ENCODE measurements at regions of chr1 and their contacts with region 1.

Region 1: DNA sequence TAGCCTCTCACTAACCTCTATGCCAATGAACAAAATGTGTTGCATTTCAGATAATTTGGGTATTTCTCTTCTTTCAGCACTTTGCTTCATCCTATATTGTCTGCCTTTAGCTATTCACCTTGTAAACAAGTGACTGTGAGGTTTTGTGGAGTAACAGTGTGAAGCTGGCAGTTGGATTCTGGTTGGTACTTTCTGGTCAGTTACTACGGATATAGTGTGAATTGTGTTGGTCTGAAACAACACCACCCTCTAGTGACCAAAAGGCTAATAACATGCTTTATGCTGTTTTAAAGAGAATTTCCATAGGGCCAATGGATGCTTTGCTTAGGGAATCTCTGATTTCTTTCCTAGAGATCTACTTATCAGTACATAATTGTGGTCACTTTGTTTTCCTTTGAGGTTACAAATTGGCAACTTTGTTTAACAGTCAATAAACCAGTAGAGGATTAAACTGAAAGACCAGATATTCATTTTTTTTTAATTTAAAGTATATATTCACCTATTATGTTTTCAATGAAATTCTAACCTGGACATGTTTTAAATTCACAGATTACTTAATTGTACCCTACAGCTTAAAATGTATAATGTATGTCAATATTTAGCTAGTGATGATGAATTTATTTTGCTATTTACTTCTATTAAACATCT is 2.5 kb upstream of the PTGER3 start:
- DNase-seq: no peak
- H3K4me3 Mint-ChIP-seq: no peak overlapping the region
- H3K27ac Mint-ChIP-seq: no peak overlapping the region
- H3K4me1 Mint-ChIP-seq: peaks cover 18% of the 10 kb centered on the region
- H3K27me3 Mint-ChIP-seq: peaks cover 44% of the 10 kb centered on the region

Region 2: DNA sequence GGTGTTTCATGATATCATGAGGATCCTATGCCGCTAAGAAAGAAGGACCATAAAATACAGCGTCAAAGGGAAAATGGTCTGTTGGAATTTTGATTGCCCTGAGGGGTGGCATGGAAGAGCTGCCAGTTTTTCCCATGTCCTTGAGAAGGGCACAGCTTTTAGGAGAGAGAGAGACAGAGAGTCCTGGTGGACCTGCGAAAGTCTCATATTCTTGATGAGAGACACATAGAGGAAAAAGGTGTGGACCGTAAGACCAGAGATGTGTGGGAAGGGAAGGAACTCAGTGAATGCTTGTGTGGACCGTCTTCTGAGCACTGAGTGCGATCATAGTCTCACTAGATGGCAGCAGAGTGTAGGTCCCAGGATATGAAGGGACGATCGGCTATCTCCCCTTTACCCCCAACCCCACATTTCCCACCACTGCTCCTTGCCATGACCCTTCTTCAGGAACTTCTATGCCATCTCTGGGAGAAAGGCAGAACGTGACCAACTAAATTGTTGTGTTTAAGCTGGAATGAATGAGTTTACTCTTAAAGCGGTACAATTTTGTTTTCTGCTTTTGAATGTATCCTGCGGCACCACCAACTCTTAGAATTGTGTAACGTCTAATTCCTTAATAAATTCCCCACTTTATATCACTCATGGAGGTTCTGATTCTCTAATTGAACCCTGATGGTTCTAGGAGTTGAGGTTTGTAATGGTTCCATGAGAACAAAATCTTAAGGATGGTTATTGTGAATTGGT is 521.3 kb before region 1 on chr1:
- intact Hi-C with region 1: loop called (anchors 1 kb)
- DNase-seq: no peak
- H3K4me3 Mint-ChIP-seq: no peak overlapping the region
- H3K27ac Mint-ChIP-seq: no peak overlapping the region
- H3K4me1 Mint-ChIP-seq: peaks cover 6% of the 10 kb centered on the region
- H3K27me3 Mint-ChIP-seq: peaks cover 27% of the 10 kb centered on the region

Region 3: GRCh38 chr1:70685300-70686241 is 364.5 kb before region 1 on chr1:
- intact Hi-C with region 1: loop called (anchors 1 kb)
- DNase-seq: peak; percentile 40
- H3K4me3 Mint-ChIP-seq: no peak overlapping the region
- H3K27ac Mint-ChIP-seq: no peak overlapping the region
- H3K4me1 Mint-ChIP-seq: peaks cover 2% of the 10 kb centered on the region
- H3K27me3 Mint-ChIP-seq: peaks cover 16% of the 10 kb centered on the region

Region 4: DNA sequence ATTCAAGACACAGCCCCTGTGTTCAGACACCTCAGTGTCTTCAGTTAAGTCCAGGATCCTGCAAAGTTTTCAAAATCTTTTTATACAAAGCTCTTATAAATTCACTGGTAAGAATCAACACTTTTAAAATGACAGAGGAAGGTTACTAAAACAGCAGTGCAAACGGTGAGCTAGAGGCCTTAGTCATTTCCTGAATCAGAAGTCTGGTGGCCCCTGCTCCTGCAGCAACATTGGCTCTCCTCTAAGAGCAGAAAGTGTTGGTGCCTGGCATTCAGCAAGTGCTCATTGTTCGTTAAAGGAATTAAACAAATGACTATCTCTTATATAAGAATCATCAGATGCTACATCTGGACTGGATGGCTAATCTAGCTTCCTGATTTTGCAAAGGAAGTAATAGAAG is 285.3 kb before region 1 on chr1:
- intact Hi-C with region 1: loop called (anchors 5 kb)
- DNase-seq: no peak
- H3K4me3 Mint-ChIP-seq: no peak overlapping the region
- H3K27ac Mint-ChIP-seq: no peak overlapping the region
- H3K4me1 Mint-ChIP-seq: peaks cover 10% of the 10 kb centered on the region
- H3K27me3 Mint-ChIP-seq: no peaks in the 10 kb centered on the region

Region 5: GRCh38 chr1:70910013-70910412 is 140.1 kb before region 1 on chr1:
- intact Hi-C with region 1: loop called (anchors 10 kb)
- DNase-seq: peak; percentile 12
- H3K4me3 Mint-ChIP-seq: no peak overlapping the region
- H3K27ac Mint-ChIP-seq: peak overlapping the region; percentile 56
- H3K4me1 Mint-ChIP-seq: peaks cover 18% of the 10 kb centered on the region
- H3K27me3 Mint-ChIP-seq: peaks cover 8% of the 10 kb centered on the region

Region 6: DNA sequence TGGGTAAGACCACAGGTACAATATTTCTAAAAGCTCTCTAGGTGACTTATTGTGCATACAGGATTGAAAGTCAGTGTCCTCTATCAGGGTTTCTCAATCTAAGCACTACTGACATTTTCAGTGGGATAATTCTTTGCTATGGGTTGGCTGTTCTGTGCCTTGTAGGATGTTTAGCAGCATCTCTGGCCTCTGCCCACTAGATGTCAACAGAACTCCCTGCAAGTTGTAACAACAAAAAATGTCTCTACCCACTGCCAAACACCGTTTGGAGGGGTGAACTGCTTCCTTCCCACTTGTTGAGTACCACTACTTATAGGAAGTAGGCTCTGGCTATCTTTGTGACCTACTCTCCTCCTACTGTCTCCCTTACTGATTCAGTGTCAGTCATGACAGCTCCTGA is 120.8 kb after region 1 on chr1:
- intact Hi-C with region 1: no loop called
- DNase-seq: no peak
- H3K4me3 Mint-ChIP-seq: no peak overlapping the region
- H3K27ac Mint-ChIP-seq: no peak overlapping the region
- H3K4me1 Mint-ChIP-seq: no peaks in the 10 kb centered on the region
- H3K27me3 Mint-ChIP-seq: no peaks in the 10 kb centered on the region